Ovary (tissue), 10 donors: ENCODE measurements at regions of chr9 and their contacts with region 1.

Region 1: DNA sequence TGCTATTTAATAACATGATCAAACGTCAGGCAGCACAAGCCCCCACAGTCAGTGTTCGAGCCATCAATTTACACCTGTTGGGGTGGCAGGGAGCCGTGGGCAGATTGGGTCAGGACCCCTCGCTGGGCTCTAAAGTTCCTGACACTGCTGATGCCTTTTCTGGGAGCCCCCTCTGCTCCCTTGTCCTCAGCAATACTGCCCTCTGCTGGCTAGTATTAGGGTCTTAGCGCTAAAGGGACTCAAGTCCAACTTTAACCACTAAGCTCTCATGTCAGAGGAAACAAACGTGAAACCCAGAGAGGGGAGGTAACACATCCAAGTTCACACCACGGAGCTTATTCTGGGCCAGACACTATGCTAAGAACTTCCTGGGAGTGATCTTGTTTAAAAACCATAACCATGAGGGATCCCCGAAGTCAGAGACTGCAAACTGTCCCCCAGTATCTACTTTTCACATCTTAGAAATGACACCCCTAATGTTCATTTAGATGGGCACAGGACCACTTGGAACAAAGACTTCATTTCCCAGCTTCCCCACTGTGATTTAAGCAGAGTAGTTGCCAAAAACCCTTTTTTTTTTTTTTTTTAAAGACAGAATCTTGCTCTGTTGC is 20.4 kb downstream of the ANKS6 start:
- DNase-seq: no peak
- H3K4me3 ChIP-seq: no peak overlapping the region
- H3K27ac ChIP-seq: no peak overlapping the region
- H3K4me1 ChIP-seq: no peaks in the 10 kb centered on the region
- H3K27me3 ChIP-seq: no peaks in the 10 kb centered on the region
- CTCF ChIP-seq: no peak
- EP300 ChIP-seq: no peak
- POLR2A ChIP-seq: no peak

Region 2: GRCh38 chr9:98207606-98208005 is 568.3 kb before region 1 on chr9:
- intact Hi-C with region 1: loop called in 1 of 4 experiments (anchors 10 kb)
- DNase-seq: no peak
- H3K4me3 ChIP-seq: no peak overlapping the region
- H3K27ac ChIP-seq: no peak overlapping the region
- H3K4me1 ChIP-seq: no peaks in the 10 kb centered on the region
- H3K27me3 ChIP-seq: no peaks in the 10 kb centered on the region
- CTCF ChIP-seq: no peak
- EP300 ChIP-seq: no peak
- POLR2A ChIP-seq: no peak

Region 3: DNA sequence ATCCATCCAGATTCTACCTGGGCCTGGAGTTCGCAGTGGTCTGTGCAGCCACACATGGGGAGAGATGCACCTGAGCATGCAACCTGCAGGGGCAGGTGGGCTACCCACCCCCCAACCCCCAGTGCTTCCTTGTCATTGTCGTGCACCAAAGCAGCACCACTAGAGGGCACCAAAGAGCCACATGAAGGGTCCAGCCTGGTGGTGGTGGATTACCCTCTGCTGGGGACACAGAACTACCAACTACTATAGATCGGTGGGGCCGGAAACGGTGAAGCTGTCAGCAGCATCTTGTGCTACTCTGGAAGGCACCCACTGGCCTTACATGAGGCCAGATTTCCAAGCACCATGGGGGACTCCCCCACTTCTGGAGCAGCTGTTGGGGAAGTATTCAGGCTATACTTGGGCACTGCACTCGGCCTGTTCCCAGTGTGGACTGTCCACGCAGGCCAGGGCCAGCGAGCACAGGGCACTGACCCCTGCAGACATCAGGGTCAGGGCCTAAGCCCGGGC is 460.3 kb before region 1 on chr9:
- intact Hi-C with region 1: loop called in 1 of 4 experiments (anchors 10 kb)
- DNase-seq: peak in 4 of 5 donors; percentile 33 to 52 (median 36)
- H3K4me3 ChIP-seq: no peak overlapping the region
- H3K27ac ChIP-seq: no peak overlapping the region
- H3K4me1 ChIP-seq: no peaks in the 10 kb centered on the region
- H3K27me3 ChIP-seq: no peaks in the 10 kb centered on the region
- CTCF ChIP-seq: no peak
- EP300 ChIP-seq: no peak
- POLR2A ChIP-seq: no peak